AG04450 (cell line): ENCODE measurements at regions of chr17 and their contacts with region 1.

Region 1: DNA sequence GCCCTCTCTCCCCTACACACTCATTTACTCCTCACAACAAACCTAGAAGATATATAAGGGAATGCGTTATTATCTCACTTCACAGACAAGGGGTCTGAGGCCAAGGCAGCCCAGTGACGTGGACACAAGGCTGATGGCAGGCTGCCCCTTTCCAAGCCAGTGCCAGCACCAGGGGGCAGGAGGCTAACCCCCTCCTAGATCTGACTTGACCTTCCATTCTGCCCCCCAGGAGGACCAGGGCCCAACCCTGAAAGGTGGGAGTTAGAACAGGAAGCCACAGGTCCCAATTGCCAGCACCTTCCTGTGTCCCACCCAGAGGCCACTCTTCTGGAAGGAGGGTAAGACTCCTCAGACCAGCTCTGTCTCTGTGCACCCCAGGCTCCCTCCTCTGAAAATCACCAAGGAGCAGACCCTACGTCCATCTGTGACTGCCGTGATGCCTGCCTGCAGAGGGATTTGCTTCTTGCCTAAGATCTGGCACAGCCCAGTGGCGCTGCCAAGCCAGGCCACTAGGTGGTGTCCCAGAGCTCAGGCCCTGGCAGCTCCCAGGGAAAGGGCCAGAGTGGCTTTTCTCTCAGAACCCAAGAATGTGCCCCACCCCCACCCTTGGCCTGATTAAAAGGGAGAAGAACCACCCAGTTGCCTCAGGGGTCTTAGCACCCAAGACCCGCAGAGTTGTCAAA is 42.4 kb upstream of the MRPS23 start:
- DNase-seq: peak; percentile 72
- H3K4me3 ChIP-seq: no peak overlapping the region
- H3K27ac ChIP-seq: peak overlapping the region; percentile 98
- H3K27me3 ChIP-seq: no peaks in the 10 kb centered on the region
- CTCF ChIP-seq: peak; percentile 99

Region 2: GRCh38 chr17:57861000-57861789 is 31.1 kb before region 1 on chr17:
- CTCF ChIA-PET with region 1: interaction called, 10 read pairs
- POLR2A ChIA-PET with region 1: interaction called, 4 read pairs
- DNase-seq: no peak
- H3K4me3 ChIP-seq: peak overlapping the region; percentile 52
- H3K27ac ChIP-seq: peak overlapping the region; percentile 68
- H3K27me3 ChIP-seq: no peaks in the 10 kb centered on the region
- CTCF ChIP-seq: no peak

Region 3: GRCh38 chr17:57875309-57876115 is 16.8 kb before region 1 on chr17:
- CTCF ChIA-PET with region 1: interaction called, 89 read pairs
- POLR2A ChIA-PET with region 1: interaction called, 17 read pairs
- DNase-seq: peak; percentile 97
- H3K4me3 ChIP-seq: peak overlapping the region; percentile 42
- H3K27ac ChIP-seq: peak overlapping the region; percentile 100
- H3K27me3 ChIP-seq: no peaks in the 10 kb centered on the region
- CTCF ChIP-seq: peak; percentile 79

Region 4: GRCh38 chr17:57902800-57903759 is 10.8 kb after region 1 on chr17:
- CTCF ChIA-PET with region 1: interaction called, 20 read pairs
- POLR2A ChIA-PET with region 1: interaction called, 6 read pairs
- DNase-seq: no peak
- H3K4me3 ChIP-seq: no peak overlapping the region
- H3K27ac ChIP-seq: peak overlapping the region; percentile 80
- H3K27me3 ChIP-seq: no peaks in the 10 kb centered on the region
- CTCF ChIP-seq: no peak

Region 5: DNA sequence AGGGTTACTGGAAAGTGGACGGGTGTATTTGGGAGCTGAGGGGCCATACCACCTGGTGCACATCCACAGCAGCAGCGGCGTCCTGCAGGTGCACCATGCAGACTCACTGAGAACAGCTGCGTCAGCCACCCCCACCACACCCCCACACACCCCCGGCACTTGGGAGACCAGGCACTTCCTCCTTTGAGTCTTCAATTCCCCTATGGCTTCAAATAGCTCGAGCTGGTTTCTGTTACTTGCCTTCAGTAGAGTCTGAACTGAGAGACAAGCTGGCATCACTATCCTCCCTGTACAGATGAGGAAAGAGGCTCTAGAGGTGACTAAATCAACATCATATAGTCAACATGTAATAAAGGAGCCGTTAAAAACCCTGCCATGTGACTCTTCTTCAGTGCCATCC is 47.5 kb after region 1 on chr17:
- CTCF ChIA-PET with region 1: interaction called, 3 read pairs
- POLR2A ChIA-PET with region 1: interaction called, 15 read pairs
- DNase-seq: no peak
- H3K4me3 ChIP-seq: no peak overlapping the region
- H3K27ac ChIP-seq: no peak overlapping the region
- H3K27me3 ChIP-seq: no peaks in the 10 kb centered on the region
- CTCF ChIP-seq: no peak

Region 6: DNA sequence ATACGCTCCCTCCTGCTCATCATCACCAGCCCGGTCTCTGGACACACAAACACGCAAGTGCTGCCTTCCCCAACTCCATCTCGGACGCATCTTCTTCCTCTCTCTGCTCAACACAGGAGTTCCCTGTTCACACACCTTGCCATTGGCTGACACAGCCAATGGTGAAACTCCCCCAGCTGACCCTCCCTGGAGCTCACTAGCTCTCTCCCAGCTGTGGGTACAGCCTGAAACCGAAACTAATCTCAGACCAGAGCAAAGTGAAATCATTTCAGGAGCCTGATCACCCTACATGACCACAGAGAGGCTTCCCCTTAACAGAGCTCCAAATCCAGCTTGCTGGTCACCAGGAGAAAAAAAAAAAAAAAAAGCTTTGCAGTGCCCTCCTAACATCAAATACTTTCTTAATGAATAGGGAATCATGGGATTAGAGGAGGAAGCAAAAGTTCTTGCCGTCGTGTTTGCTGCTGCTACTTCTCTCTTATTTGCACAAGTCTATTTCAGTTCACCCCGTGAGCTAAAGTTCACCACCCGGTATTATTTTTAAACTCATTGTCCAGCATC is 54.6 kb after region 1 on chr17:
- CTCF ChIA-PET with region 1: interaction called, 15 read pairs
- POLR2A ChIA-PET with region 1: no interaction called
- DNase-seq: peak; percentile 55
- H3K4me3 ChIP-seq: peak overlapping the region; percentile 53
- H3K27ac ChIP-seq: peak overlapping the region; percentile 81
- H3K27me3 ChIP-seq: no peaks in the 10 kb centered on the region
- CTCF ChIP-seq: no peak

Region 7: GRCh38 chr17:57987580-57988421 is 95.5 kb after region 1 on chr17 and contains the start of gene VEZF1:
- CTCF ChIA-PET with region 1: interaction called, 39 read pairs
- POLR2A ChIA-PET with region 1: interaction called, 11 read pairs
- DNase-seq: no peak
- H3K4me3 ChIP-seq: peak within 1 kb of the TSS; percentile 79
- H3K27ac ChIP-seq: peak within 1 kb of the TSS; percentile 96
- H3K27me3 ChIP-seq: no peaks in the 10 kb centered on the region
- CTCF ChIP-seq: no peak
- polyA plus RNA-seq, gene VEZF1: 34.2 and 38.9 TPM in 2 replicates